ENCODE measurements at regions of chr3 and their contacts with region 1.

Region 1: DNA sequence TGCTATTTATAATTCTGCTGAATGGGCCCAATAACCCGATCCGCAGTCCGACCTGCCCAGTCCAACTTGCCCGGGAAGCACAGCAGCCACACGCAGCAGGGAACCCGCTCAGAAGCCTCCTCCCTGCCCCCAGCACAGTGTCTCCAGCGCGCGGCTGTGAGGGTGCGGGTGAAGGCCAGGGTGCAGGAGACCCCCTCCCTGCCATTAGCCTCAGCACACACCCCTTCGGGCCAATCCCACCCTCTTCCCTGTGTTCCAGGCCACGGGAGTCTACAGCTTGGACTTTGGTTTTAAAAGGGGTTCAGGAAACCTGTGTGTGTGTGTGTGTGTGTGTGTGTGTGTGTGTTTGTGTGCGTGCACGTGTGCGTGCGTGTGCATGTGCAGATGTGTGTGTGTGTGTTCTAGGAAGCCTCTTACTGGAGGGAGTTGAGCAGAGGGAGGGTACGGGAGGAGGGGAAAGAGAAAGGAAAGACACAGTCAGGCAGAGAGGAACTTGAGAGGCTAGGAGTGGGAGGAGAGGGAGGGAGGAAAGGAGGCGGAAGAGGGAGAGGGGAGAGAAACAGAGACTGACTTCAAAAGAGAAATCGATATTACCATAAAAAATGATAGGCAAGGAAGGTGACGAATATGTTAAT is 34.2 kb downstream of the ATP2B2 start:
- DNase-seq: peak; percentile 24 to 41
- ATAC-seq: peak; percentile 28 to 40
- H3K4me3 ChIP-seq: peak overlapping the region in 3 of 4 donors; percentile 14 to 39 (median 14)
- H3K27ac ChIP-seq: peak overlapping the region; percentile 91 to 96 (median 94)
- H3K4me1 ChIP-seq: peaks cover 44 to 45% of the 10 kb centered on the region in 2 donors
- H3K27me3 ChIP-seq: no peaks in the 10 kb centered on the region
- CTCF ChIP-seq: no peak
- POLR2A ChIP-seq: no peak

Region 2: GRCh38 chr3:10088232-10088631 is 382.9 kb before region 1 on chr3:
- in situ Hi-C with region 1: no loop called
- intact Hi-C with region 1: no loop called
- DNase-seq: no peak
- ATAC-seq: no peak
- H3K4me3 ChIP-seq: no peak overlapping the region
- H3K27ac ChIP-seq: no peak overlapping the region
- H3K4me1 ChIP-seq: no peaks in the 10 kb centered on the region
- H3K27me3 ChIP-seq: no peaks in the 10 kb centered on the region
- CTCF ChIP-seq: no peak
- POLR2A ChIP-seq: no peak

Region 3: GRCh38 chr3:10387881-10388609 is 83.1 kb before region 1 on chr3:
- in situ Hi-C with region 1: no loop called
- intact Hi-C with region 1: no loop called
- DNase-seq: no peak
- ATAC-seq: no peak
- H3K4me3 ChIP-seq: no peak overlapping the region
- H3K27ac ChIP-seq: no peak overlapping the region
- H3K4me1 ChIP-seq: no peaks in the 10 kb centered on the region
- H3K27me3 ChIP-seq: no peaks in the 10 kb centered on the region
- CTCF ChIP-seq: no peak
- POLR2A ChIP-seq: no peak

Region 4: GRCh38 chr3:10432156-10432845 is 38.9 kb before region 1 on chr3:
- in situ Hi-C with region 1: no loop called
- intact Hi-C with region 1: loop called (anchors 5 kb)
- DNase-seq: peak; percentile 32 to 87
- ATAC-seq: peak; percentile 71 to 82
- H3K4me3 ChIP-seq: no peak overlapping the region
- H3K27ac ChIP-seq: peak overlapping the region; percentile 60 to 97 (median 81)
- H3K4me1 ChIP-seq: peaks cover 38 to 54% of the 10 kb centered on the region in 2 donors
- H3K27me3 ChIP-seq: no peaks in the 10 kb centered on the region
- CTCF ChIP-seq: no peak
- POLR2A ChIP-seq: no peak

Region 5: GRCh38 chr3:10546181-10546624 is 75.0 kb after region 1 on chr3:
- in situ Hi-C with region 1: no loop called
- intact Hi-C with region 1: no loop called
- DNase-seq: no peak
- ATAC-seq: no peak
- H3K4me3 ChIP-seq: no peak overlapping the region
- H3K27ac ChIP-seq: no peak overlapping the region
- H3K4me1 ChIP-seq: peaks cover 12 to 18% of the 10 kb centered on the region in 2 donors
- H3K27me3 ChIP-seq: no peaks in the 10 kb centered on the region
- CTCF ChIP-seq: no peak
- POLR2A ChIP-seq: no peak